ENCODE measurements at regions of chr4 and their contacts with region 1.

Region 1: DNA sequence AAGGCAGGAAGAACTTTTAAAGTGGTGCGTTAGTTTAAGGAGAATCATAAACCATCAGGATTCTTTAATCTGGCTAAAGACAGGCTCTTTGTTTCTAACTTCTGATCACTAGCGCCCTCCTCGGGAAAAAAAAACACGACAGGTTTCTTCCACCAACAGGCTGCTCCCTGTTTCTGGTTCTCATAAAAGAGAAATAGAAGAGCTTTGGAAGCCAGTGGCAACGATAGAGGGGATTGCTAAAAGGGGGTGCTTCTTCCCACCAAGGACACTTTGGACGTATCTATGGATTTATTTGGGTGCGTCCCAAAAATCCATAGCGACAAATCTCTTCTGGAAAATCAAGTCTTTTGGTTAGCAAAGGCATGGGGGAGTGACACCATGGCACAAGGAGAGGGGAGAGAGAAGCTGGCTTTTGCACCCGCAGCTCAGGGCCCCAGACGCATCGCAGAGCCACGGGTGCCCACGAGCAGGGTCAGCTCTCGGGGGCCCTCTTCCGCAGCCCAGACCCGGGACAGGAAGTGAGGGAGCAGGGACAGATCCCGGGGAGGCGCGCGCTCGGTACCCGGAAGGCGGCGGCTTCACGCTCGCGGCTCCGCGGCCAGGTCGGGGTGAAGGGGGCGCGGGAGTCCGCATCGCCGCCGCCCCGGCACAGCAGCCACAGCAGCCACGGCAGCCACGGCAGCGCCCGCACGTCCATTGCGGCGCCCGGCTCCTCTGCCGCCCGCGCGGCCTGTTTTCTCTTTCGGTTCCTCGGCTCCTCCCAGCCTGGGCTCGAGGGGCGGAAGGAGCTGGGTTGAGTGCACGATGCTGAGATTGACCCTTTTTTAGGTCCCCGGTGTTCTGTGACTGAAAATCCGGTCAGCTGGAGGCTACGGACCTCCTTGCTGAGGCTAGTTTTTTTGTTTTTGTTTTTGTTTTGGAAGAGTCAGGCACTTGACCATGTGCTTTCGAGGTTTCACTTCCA is at the start of gene CTSO:
- DNase-seq: peak; percentile 78
- H3K4me3 Mint-ChIP-seq: peak within 1 kb of the TSS; percentile 93
- H3K27ac Mint-ChIP-seq: peak within 1 kb of the TSS; percentile 92
- H3K4me1 Mint-ChIP-seq: peaks cover 14% of the 10 kb centered on the region
- H3K27me3 Mint-ChIP-seq: peaks cover 4% of the 10 kb centered on the region
- total RNA-seq, gene CTSO: 2.5 to 2.6 TPM

Region 2: DNA sequence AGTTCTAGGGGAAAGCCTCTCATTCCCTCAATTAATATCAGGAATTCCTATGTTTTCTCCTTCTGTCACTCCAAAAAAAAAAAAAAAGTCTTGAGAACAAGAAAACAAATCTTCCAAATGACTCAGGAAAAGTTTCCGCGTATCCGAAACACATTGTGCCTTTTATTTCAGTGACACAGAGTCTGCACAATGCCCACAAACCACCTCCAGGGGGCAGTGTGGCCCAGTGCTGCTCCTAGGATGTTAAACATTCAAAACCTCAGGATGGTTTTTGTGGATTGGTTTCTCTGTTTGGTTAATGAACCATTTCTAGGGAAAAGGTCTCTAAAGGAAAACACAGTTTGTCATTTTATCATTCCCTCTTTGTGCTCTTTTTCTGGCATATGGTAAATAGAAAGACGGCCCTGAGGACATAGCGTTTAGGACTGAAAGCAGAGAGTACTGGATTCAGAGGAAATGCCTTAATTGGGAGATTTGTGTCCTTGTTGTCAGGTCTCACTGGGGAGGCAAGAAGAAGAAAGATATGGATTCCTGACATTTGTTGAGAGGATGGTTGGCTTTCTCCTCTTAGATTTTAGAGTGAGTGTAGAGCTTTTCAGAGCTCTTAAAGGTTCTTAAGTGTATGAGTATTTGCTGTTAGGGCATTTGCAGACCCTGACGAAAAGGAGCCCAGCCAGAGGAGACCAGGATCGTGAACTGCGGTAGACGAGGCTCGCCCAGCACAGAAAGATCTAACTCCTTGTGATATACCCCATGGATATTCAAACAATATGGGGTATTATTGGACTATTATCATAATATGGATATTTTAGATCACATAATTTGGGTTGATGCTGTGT is 510.9 kb before region 1 on chr4:
- CTCF ChIA-PET with region 1: no interaction called
- POLR2A ChIA-PET with region 1: no interaction called
- intact Hi-C with region 1: loop called (anchors 5 kb)
- DNase-seq: peak; percentile 65
- H3K4me3 Mint-ChIP-seq: no peak overlapping the region
- H3K27ac Mint-ChIP-seq: no peak overlapping the region
- H3K4me1 Mint-ChIP-seq: peaks cover 2% of the 10 kb centered on the region
- H3K27me3 Mint-ChIP-seq: peaks cover 13% of the 10 kb centered on the region

Region 3: DNA sequence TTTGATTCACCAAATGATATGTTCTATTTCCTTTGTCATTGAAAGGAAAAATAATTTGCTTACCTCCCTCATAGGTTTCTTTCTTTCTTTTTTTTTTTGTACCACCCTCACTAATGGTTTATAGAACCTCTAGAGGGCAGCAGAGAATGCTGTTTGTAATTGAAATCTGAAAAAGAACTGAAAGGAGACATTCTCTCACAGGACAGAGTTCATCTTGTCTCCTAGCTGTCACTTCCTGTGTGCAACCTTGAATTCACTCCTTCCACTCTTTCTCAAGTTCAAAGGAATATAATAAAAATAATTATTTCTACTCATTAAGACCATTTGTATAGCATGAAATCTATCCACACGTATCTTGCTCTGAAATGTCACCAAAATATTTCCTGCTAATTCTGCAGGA is 143.6 kb before region 1 on chr4:
- CTCF ChIA-PET with region 1: interaction called, 32 read pairs
- POLR2A ChIA-PET with region 1: no interaction called
- intact Hi-C with region 1: loop called (anchors 1 kb)
- DNase-seq: no peak
- H3K4me3 Mint-ChIP-seq: no peak overlapping the region
- H3K27ac Mint-ChIP-seq: no peak overlapping the region
- H3K4me1 Mint-ChIP-seq: no peaks in the 10 kb centered on the region
- H3K27me3 Mint-ChIP-seq: peaks cover 3% of the 10 kb centered on the region

Region 4: GRCh38 chr4:156623376-156623775 is 669.9 kb after region 1 on chr4:
- CTCF ChIA-PET with region 1: no interaction called
- POLR2A ChIA-PET with region 1: no interaction called
- intact Hi-C with region 1: no loop called
- DNase-seq: no peak
- H3K4me3 Mint-ChIP-seq: no peak overlapping the region
- H3K27ac Mint-ChIP-seq: no peak overlapping the region
- H3K4me1 Mint-ChIP-seq: no peaks in the 10 kb centered on the region
- H3K27me3 Mint-ChIP-seq: no peaks in the 10 kb centered on the region

Measured in activated CD4-positive, alpha-beta memory T cell treated with anti-CD3 and anti-CD28 coated beads for 36 hours (primary cell).